Natural killer cell (primary cell): ENCODE measurements at regions of chr7 and their contacts with region 1.

Region 1: GRCh38 chr7:130896898-130897514 is 163.0 kb upstream of the KLF14 start:
- DNase-seq: peak; percentile 62 to 90
- ATAC-seq: peak; percentile 81 to 95 (median 89)
- H3K4me3 ChIP-seq: no peak overlapping the region
- H3K4me3 Mint-ChIP-seq: peak overlapping the region; percentile 31
- H3K27ac ChIP-seq: no peak overlapping the region
- H3K27ac Mint-ChIP-seq: peak overlapping the region; percentile 45 to 87
- H3K4me1 ChIP-seq: peaks cover 25% of the 10 kb centered on the region
- H3K4me1 Mint-ChIP-seq: peaks cover 41 to 57% of the 10 kb centered on the region in 2 donors
- H3K27me3 ChIP-seq: no peaks in the 10 kb centered on the region
- H3K27me3 Mint-ChIP-seq: no peaks in the 10 kb centered on the region
- CTCF ChIP-seq: peak; percentile 95

Region 2: GRCh38 chr7:130941322-130942210 is 44.6 kb after region 1 on chr7:
- intact Hi-C with region 1: loop called (anchors 10 kb)
- DNase-seq: peak in 1 of 2 donors; percentile 73
- ATAC-seq: peak in 2 of 3 donors; percentile 19 to 47
- H3K4me3 ChIP-seq: peak overlapping the region; percentile 35
- H3K4me3 Mint-ChIP-seq: peak overlapping the region; percentile 94
- H3K27ac ChIP-seq: peak overlapping the region; percentile 77
- H3K27ac Mint-ChIP-seq: peak overlapping the region; percentile 89 to 97
- H3K4me1 ChIP-seq: peaks cover 18% of the 10 kb centered on the region
- H3K4me1 Mint-ChIP-seq: peaks cover 80 to 85% of the 10 kb centered on the region in 2 donors
- H3K27me3 ChIP-seq: no peaks in the 10 kb centered on the region
- H3K27me3 Mint-ChIP-seq: no peaks in the 10 kb centered on the region
- CTCF ChIP-seq: no peak

Region 3: GRCh38 chr7:131027287-131027773 is 130.3 kb after region 1 on chr7:
- intact Hi-C with region 1: loop called (anchors 5 kb)
- DNase-seq: peak in 1 of 2 donors; percentile 67
- ATAC-seq: peak; percentile 32 to 46 (median 35)
- H3K4me3 ChIP-seq: no peak overlapping the region
- H3K4me3 Mint-ChIP-seq: peak overlapping the region; percentile 73
- H3K27ac ChIP-seq: peak overlapping the region; percentile 59
- H3K27ac Mint-ChIP-seq: peak overlapping the region; percentile 76 to 82
- H3K4me1 ChIP-seq: peaks cover 25% of the 10 kb centered on the region
- H3K4me1 Mint-ChIP-seq: peaks cover 75 to 76% of the 10 kb centered on the region in 2 donors
- H3K27me3 ChIP-seq: no peaks in the 10 kb centered on the region
- H3K27me3 Mint-ChIP-seq: no peaks in the 10 kb centered on the region
- CTCF ChIP-seq: no peak

Region 4: GRCh38 chr7:131052285-131052904 is 155.4 kb after region 1 on chr7:
- intact Hi-C with region 1: no loop called
- DNase-seq: no peak
- ATAC-seq: no peak
- H3K4me3 ChIP-seq: no peak overlapping the region
- H3K4me3 Mint-ChIP-seq: peak overlapping the region; percentile 18
- H3K27ac ChIP-seq: no peak overlapping the region
- H3K27ac Mint-ChIP-seq: peak overlapping the region in 1 of 2 donors; percentile 30
- H3K4me1 ChIP-seq: peaks cover 35% of the 10 kb centered on the region
- H3K4me1 Mint-ChIP-seq: peaks cover 69 to 72% of the 10 kb centered on the region in 2 donors
- H3K27me3 ChIP-seq: no peaks in the 10 kb centered on the region
- H3K27me3 Mint-ChIP-seq: no peaks in the 10 kb centered on the region
- CTCF ChIP-seq: no peak

Region 5: GRCh38 chr7:131424219-131424822 is 527.3 kb after region 1 on chr7:
- intact Hi-C with region 1: loop called (anchors 1 kb)
- DNase-seq: peak in 1 of 2 donors; percentile 66
- ATAC-seq: peak; percentile 75 to 90 (median 76)
- H3K4me3 ChIP-seq: no peak overlapping the region
- H3K4me3 Mint-ChIP-seq: no peak overlapping the region
- H3K27ac ChIP-seq: no peak overlapping the region
- H3K27ac Mint-ChIP-seq: no peak overlapping the region
- H3K4me1 ChIP-seq: no peaks in the 10 kb centered on the region
- H3K4me1 Mint-ChIP-seq: peaks cover 6% of the 10 kb centered on the region in 2 donors
- H3K27me3 ChIP-seq: no peaks in the 10 kb centered on the region
- H3K27me3 Mint-ChIP-seq: no peaks in the 10 kb centered on the region
- CTCF ChIP-seq: peak; percentile 61